ENCODE measurements at regions of chr7 and their contacts with region 1.

Region 1: GRCh38 chr7:30938435-30939316 is 25.1 kb upstream of the GHRHR start:
- DNase-seq: peak; percentile 98
- ATAC-seq: peak; percentile 95
- H3K4me3 Mint-ChIP-seq: peak overlapping the region; percentile 47
- H3K27ac Mint-ChIP-seq: no peak overlapping the region
- H3K4me1 Mint-ChIP-seq: 0 out of 2 replicates have a peak, but pooled peaks cover 4% of the 10 kb centered on the region
- H3K27me3 Mint-ChIP-seq: no peaks in the 10 kb centered on the region; the same call in none of the 2 replicates
- CTCF ChIP-seq: peak; percentile 98

Region 2: GRCh38 chr7:30791114-30791779 is 147.4 kb before region 1 on chr7:
- CTCF ChIA-PET with region 1: interaction called, 14 read pairs
- POLR2A ChIA-PET with region 1: no interaction called
- DNase-seq: peak; percentile 52
- ATAC-seq: peak; percentile 81
- H3K4me3 Mint-ChIP-seq: no peak overlapping the region
- H3K27ac Mint-ChIP-seq: no peak overlapping the region
- H3K4me1 Mint-ChIP-seq: peaks cover 7% of the 10 kb centered on the region; the same call in 1 of the 2 replicates
- H3K27me3 Mint-ChIP-seq: no peaks in the 10 kb centered on the region
- CTCF ChIP-seq: no peak

Region 3: GRCh38 chr7:30880090-30880720 is 58.5 kb before region 1 on chr7:
- CTCF ChIA-PET with region 1: interaction called, 13 read pairs
- POLR2A ChIA-PET with region 1: no interaction called
- DNase-seq: no peak
- ATAC-seq: no peak
- H3K4me3 Mint-ChIP-seq: no peak overlapping the region
- H3K27ac Mint-ChIP-seq: no peak overlapping the region; the same call in 1 of the 2 replicates
- H3K4me1 Mint-ChIP-seq: peaks cover 41% of the 10 kb centered on the region
- H3K27me3 Mint-ChIP-seq: no peaks in the 10 kb centered on the region; the same call in 1 of the 2 replicates
- CTCF ChIP-seq: no peak

Region 4: GRCh38 chr7:30950197-30950596 is 11.5 kb after region 1 on chr7:
- CTCF ChIA-PET with region 1: interaction called, 11 read pairs
- POLR2A ChIA-PET with region 1: no interaction called
- DNase-seq: no peak
- ATAC-seq: no peak
- H3K4me3 Mint-ChIP-seq: no peak overlapping the region
- H3K27ac Mint-ChIP-seq: no peak overlapping the region
- H3K4me1 Mint-ChIP-seq: no peaks in the 10 kb centered on the region
- H3K27me3 Mint-ChIP-seq: peaks cover 19% of the 10 kb centered on the region
- CTCF ChIP-seq: no peak

Region 5: GRCh38 chr7:30983042-30983913 is 44.6 kb after region 1 on chr7:
- CTCF ChIA-PET with region 1: interaction called, 67 read pairs
- POLR2A ChIA-PET with region 1: interaction called, 5 read pairs
- DNase-seq: peak; percentile 97
- ATAC-seq: peak; percentile 62
- H3K4me3 Mint-ChIP-seq: peak overlapping the region; percentile 67
- H3K27ac Mint-ChIP-seq: no peak overlapping the region
- H3K4me1 Mint-ChIP-seq: peaks cover 53% of the 10 kb centered on the region
- H3K27me3 Mint-ChIP-seq: peaks cover 7% of the 10 kb centered on the region
- CTCF ChIP-seq: peak; percentile 90

Region 6: GRCh38 chr7:31122649-31123058 is 184.0 kb after region 1 on chr7:
- CTCF ChIA-PET with region 1: interaction called, 80 read pairs
- POLR2A ChIA-PET with region 1: interaction called, 3 read pairs
- DNase-seq: peak; percentile 78
- ATAC-seq: peak; percentile 91
- H3K4me3 Mint-ChIP-seq: no peak overlapping the region
- H3K27ac Mint-ChIP-seq: peak overlapping the region; percentile 34; the same call in 1 of the 2 replicates
- H3K4me1 Mint-ChIP-seq: peaks cover 8% of the 10 kb centered on the region
- H3K27me3 Mint-ChIP-seq: peaks cover 7% of the 10 kb centered on the region; the same call in 1 of the 2 replicates
- CTCF ChIP-seq: peak; percentile 60

Measured in WTC11 (cell line).